ENCODE measurements at regions of chr2 and their contacts with region 1.

Region 1: DNA sequence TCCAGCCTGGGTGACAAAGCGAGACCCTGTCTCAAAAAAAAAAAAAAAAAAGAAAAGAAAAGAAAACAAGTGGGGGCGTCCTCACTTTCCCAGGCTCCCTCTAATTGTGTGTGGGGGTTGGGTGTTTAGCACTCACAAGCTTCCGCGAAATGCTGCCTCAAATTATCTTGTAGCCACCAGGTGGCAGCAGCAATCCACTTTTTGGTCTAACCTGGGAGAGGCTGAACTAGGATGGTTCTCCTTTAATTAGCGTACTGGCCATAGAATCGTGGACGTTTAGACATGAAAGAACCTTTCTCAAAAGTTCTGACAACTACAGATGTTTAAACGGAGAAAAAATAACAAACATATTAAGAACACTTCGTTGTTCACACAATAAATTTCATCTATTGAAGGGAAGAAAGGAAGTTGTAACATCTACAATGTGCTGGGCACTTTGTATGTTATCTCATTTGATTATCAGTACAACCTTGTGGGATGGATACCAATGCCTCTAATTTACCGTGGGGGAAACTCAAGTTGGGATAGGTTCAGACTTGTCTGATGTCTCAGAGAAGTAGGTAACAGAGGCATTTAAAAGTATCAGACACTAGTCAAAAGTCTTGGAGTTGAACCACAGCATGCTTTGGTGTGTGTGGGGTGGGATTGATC is 122.7 kb upstream of the NABP1 start:
- DNase-seq: peak; percentile 75 to 80
- ATAC-seq: peak; percentile 83 to 96 (median 88)
- H3K4me3 ChIP-seq: no peak overlapping the region
- H3K27ac ChIP-seq: no peak overlapping the region
- H3K4me1 ChIP-seq: no peaks in the 10 kb centered on the region
- H3K27me3 ChIP-seq: no peaks in the 10 kb centered on the region
- CTCF ChIP-seq: peak; percentile 76

Region 2: GRCh38 chr2:191582355-191582754 is 27.1 kb after region 1 on chr2:
- intact Hi-C with region 1: no loop called
- DNase-seq: no peak
- ATAC-seq: peak in 1 of 4 donors; percentile 26
- H3K4me3 ChIP-seq: no peak overlapping the region
- H3K27ac ChIP-seq: no peak overlapping the region
- H3K4me1 ChIP-seq: no peaks in the 10 kb centered on the region
- H3K27me3 ChIP-seq: no peaks in the 10 kb centered on the region
- CTCF ChIP-seq: no peak

Region 3: DNA sequence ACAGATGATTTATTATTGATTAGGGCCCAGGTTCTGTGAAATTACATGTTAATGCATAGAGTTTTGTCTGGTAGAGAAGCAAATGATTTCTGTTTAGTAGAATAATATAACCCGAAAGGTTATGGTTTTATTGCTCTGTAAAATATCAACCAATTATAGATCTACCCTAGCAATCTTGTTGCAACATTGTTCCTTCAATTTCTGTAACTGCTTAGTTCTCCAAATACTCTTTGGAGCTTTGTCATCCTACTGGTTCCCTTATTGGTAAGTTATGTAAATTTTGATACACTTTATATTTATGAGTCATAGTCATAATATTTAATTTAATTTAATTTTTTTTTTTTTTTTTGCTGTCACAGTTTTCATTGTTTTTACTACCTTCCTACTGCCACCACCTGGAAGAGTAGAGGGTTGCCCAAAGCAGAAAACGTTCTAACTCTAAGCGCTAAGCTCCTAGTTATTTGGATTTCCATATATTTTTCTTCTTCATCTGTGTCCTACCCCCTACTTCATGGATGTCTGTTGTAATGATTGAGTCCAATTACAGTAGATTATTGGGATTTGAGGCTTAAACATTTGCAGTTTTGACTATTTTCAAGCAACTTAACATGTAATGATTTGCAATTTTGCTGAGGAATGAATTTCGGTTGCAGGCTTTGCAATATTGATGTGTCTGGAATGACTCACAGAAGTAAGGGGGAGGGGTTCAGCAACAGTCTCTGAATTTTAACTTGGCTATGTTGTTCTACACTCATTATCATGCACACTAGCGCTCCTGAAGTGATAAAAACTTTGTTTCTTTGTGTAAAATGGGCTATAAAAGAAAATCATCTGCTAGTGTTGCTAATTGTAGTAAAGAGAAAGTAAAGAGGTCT is 173.8 kb after region 1 on chr2:
- intact Hi-C with region 1: no loop called
- DNase-seq: no peak
- ATAC-seq: no peak
- H3K4me3 ChIP-seq: no peak overlapping the region
- H3K27ac ChIP-seq: no peak overlapping the region
- H3K4me1 ChIP-seq: no peaks in the 10 kb centered on the region
- H3K27me3 ChIP-seq: peaks cover 0 to 6% (median 3%) of the 10 kb centered on the region in 3 donors
- CTCF ChIP-seq: no peak

Region 4: GRCh38 chr2:191811807-191812602 is 256.8 kb after region 1 on chr2:
- intact Hi-C with region 1: loop called in 1 of 2 experiments (anchors 5 kb)
- DNase-seq: peak; percentile 38 to 58
- ATAC-seq: peak; percentile 46 to 69 (median 52)
- H3K4me3 ChIP-seq: peak overlapping the region; percentile 24
- H3K27ac ChIP-seq: no peak overlapping the region
- H3K4me1 ChIP-seq: no peaks in the 10 kb centered on the region
- H3K27me3 ChIP-seq: no peaks in the 10 kb centered on the region
- CTCF ChIP-seq: peak; percentile 73

Region 5: DNA sequence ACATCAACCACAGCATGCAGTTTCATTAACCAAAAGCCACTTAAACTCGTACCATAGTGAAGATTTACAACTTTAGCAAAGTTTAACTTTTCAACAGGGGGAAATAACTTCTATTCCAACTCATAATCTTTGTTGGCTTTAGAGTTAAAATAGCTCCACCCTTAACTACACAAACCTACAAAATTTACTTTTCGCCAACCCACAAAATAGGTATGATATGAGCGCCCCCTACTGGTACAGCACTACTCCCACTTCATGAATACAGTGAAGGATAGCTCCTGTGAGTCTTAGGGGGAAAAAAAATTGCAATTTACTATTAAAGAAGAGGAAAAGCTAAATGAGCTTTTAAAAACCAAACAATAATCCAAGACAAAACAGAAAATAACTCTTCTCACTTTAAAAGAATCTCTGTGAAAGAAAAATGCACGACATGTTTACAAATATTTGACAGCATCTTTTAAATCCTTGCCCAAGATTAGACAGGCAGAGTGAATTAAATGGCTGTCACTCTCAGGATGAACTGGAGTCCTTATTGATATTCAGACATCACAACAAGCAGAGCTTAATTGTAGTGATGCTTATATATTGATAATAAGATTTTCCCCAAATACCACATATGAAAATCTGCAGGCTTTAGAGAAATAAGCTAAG is 607.3 kb after region 1 on chr2:
- intact Hi-C with region 1: loop called (anchors 2 to 5 kb)
- DNase-seq: peak in 1 of 2 donors; percentile 14
- ATAC-seq: peak; percentile 49 to 75 (median 63)
- H3K4me3 ChIP-seq: peak overlapping the region; percentile 31
- H3K27ac ChIP-seq: no peak overlapping the region
- H3K4me1 ChIP-seq: peaks cover 4% of the 10 kb centered on the region
- H3K27me3 ChIP-seq: peaks cover 0 to 2% (median 0%) of the 10 kb centered on the region in 3 donors
- CTCF ChIP-seq: peak; percentile 94

Measured in psoas muscle (tissue), 8 donors.